ENCODE measurements at regions of chr2 and their contacts with region 1.

Region 1: DNA sequence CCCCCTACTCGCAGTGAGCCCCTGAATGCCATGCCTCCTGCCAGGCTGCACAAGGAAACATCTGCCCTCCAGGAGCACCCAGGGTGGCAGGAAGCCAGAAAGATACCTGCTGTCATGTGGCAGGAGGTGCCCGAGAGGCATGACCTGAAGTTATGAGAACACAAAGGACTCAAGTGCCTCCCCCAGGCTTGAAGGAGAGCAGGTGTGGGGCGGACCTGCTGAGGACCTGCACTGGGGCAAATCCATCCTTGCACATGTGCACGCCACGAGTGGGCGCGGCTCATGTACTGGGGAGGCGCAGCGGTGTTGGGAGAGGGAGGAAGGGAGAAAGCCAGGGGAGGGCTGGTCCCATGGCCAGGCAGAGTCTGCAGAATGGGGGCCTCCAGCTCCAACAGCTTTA is 26.9 kb downstream of the SDC1 start:
- DNase-seq: no peak
- H3K4me3 ChIP-seq: no peak overlapping the region
- H3K27ac ChIP-seq: no peak overlapping the region
- H3K4me1 ChIP-seq: peaks cover 0 to 17% of the 10 kb centered on the region in 2 experiments; a peak in 1 of 4 replicates
- H3K27me3 ChIP-seq: no peaks in the 10 kb centered on the region
- CTCF ChIP-seq: no peak
- EP300 ChIP-seq: no peak
- RAD21 ChIP-seq: no peak

Region 2: GRCh38 chr2:19989681-19990415 is 208.2 kb before region 1 on chr2 and contains the start of gene WDR35:
- CTCF ChIA-PET with region 1: no interaction called
- POLR2A ChIA-PET with region 1: no interaction called
- DNase-seq: peak; percentile 100
- H3K4me3 ChIP-seq: peak within 1 kb of the TSS; percentile 84 to 100
- H3K27ac ChIP-seq: peak within 1 kb of the TSS; percentile 79 to 95
- H3K4me1 ChIP-seq: peaks cover 14 to 27% of the 10 kb centered on the region in 2 experiments; a peak in 3 of 4 replicates
- H3K27me3 ChIP-seq: no peaks in the 10 kb centered on the region
- CTCF ChIP-seq: no peak
- EP300 ChIP-seq: no peak
- RAD21 ChIP-seq: no peak
- polyA plus RNA-seq, gene WDR35: 8.6 and 12.1 TPM in 2 replicates

Region 3: DNA sequence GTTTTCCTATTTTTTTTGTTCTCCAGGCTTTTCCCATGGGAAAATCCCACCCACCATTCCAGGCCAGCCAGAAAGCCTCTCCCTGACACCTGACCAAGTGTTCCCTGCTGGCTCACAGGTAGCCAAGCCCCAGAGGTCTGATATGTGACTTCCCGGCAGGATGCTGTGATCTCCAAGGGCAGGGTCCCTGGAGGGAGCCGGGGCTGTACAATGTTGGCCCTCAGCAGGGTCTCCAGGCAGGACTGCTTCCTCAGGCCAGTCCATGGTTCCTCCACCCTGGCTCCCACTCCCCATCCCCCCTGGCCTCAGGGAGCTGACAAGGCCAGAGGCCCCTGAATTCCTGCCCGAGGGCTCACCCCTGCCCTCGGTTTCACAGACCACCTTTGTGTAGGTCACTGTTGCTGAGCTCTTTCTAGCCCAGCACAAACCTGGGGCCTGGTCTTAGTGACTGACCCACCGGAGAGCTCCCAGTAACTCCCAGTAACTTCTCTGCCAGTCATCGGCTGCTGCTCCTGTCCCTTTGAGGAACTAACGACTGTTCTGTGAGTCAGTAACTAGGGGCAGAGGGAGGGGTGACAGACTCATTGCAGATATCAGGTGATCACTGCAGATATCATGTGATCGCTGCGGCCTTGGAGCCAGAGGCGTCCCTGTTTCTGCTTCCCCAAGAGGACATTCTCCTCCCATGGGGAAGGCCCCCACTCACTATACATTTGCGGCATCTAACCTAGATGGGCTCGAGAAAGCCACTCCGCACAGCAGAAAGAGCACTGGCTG is 11.7 kb before region 1 on chr2:
- CTCF ChIA-PET with region 1: interaction called, 11 read pairs
- POLR2A ChIA-PET with region 1: no interaction called
- DNase-seq: no peak
- H3K4me3 ChIP-seq: no peak overlapping the region
- H3K27ac ChIP-seq: peak overlapping the region in 1 of 2 experiments; percentile 55; a peak in 2 of 4 replicates
- H3K4me1 ChIP-seq: peaks cover 19 to 32% of the 10 kb centered on the region in 2 experiments; a peak in 2 of 4 replicates
- H3K27me3 ChIP-seq: no peaks in the 10 kb centered on the region
- CTCF ChIP-seq: no peak
- EP300 ChIP-seq: no peak
- RAD21 ChIP-seq: no peak

Measured in SK-N-SH (cell line).